A549 (cell line): ENCODE measurements at regions of chr18 and their contacts with region 1.

Region 1: DNA sequence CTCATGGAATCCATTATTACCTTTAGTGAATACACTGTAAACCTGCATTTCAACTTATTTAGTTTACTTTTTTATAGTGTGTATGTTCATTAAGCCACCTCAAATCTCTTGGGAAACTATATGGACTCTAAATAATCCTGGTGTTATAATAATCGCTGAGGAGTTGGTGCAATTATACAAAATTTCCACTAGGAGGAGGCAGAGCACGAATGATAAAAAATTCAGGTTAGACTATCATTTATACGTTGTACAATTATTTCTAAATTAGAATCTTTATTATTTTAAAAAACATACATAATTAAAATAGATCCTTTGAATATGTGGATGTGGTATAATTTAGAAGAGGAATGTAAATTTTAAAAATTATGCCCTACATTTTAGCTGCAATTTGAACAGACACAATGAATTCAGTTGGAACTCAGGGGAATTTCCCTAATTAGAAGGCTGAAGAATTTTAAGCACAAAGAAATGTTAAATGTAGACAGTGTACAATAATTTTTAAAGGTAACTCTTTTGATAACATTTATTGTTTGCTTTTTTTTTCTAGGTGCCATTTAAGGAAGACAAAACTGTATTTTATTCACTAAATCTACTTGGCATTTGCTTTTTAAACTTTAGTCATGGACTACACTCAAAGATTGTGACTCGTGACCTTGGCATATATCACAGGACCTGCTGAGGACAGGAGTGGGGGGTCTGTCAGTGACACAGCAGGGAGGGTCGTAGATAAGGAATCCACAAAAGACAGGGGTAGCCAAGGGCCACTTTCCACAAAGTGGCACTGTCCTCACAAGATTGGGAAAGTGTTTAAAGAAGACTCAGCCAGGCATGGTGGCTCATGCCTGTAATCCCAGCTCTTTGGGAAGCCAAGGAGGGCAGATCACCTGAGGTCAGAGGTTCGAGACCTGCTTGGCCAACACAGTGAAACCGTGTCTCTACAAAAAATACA is 45.5 kb downstream of the RAB12 start:
- DNase-seq: peak; percentile 22 to 43
- ATAC-seq: peak in 1 of 2 experiments; percentile 39; a peak in 1 of 6 replicates
- H3K4me3 ChIP-seq: no peak overlapping the region
- H3K27ac ChIP-seq: peak overlapping the region; percentile 26 to 72; a peak in 4 of 6 replicates
- H3K4me1 ChIP-seq: peaks cover 19% of the 10 kb centered on the region
- CTCF ChIP-seq: peak; percentile 86
- EP300 ChIP-seq: no peak
- POLR2A ChIP-seq: no peak
- RAD21 ChIP-seq: peak; percentile 81 to 83

Region 2: GRCh38 chr18:8639762-8640161 is 15.0 kb before region 1 on chr18:
- CTCF ChIA-PET with region 1: interaction called, 23 read pairs
- POLR2A ChIA-PET with region 1: no interaction called
- DNase-seq: no peak
- ATAC-seq: no peak
- H3K4me3 ChIP-seq: no peak overlapping the region
- H3K27ac ChIP-seq: no peak overlapping the region
- H3K4me1 ChIP-seq: no peaks in the 10 kb centered on the region
- CTCF ChIP-seq: no peak
- EP300 ChIP-seq: no peak
- POLR2A ChIP-seq: no peak
- RAD21 ChIP-seq: no peak

Region 3: GRCh38 chr18:8685141-8685913 is 30.6 kb after region 1 on chr18:
- CTCF ChIA-PET with region 1: interaction called, 12 read pairs
- POLR2A ChIA-PET with region 1: no interaction called
- DNase-seq: no peak
- ATAC-seq: no peak
- H3K4me3 ChIP-seq: no peak overlapping the region
- H3K27ac ChIP-seq: 0 out of 6 replicates have a peak overlapping the region, but pooled peaks of 1 of the 2 experiments have one; percentile 11
- H3K4me1 ChIP-seq: no peaks in the 10 kb centered on the region
- CTCF ChIP-seq: no peak
- EP300 ChIP-seq: no peak
- POLR2A ChIP-seq: no peak
- RAD21 ChIP-seq: no peak